Endothelial cell of umbilical vein (primary cell): ENCODE measurements at regions of chr20 and their contacts with region 1.

Region 1: GRCh38 chr20:44733341-44734069 is 12.2 kb upstream of the KCNK15 start:
- DNase-seq: peak; percentile 74
- H3K4me3 ChIP-seq: no peak overlapping the region
- H3K27ac ChIP-seq: no peak overlapping the region
- H3K4me1 ChIP-seq: peaks cover 12% of the 10 kb centered on the region
- H3K27me3 ChIP-seq: no peaks in the 10 kb centered on the region
- CTCF ChIP-seq: peak; percentile 84 to 92
- POLR2A ChIP-seq: no peak

Region 2: GRCh38 chr20:44532259-44532980 is 201.1 kb before region 1 on chr20:
- CTCF ChIA-PET with region 1: no interaction called
- POLR2A ChIA-PET with region 1: no interaction called
- dilution Hi-C with region 1: no loop called
- intact Hi-C with region 1: loop called (anchors 10 kb)
- DNase-seq: peak; percentile 52
- H3K4me3 ChIP-seq: peak overlapping the region; percentile 80 to 92 (median 85)
- H3K27ac ChIP-seq: peak overlapping the region; percentile 78
- H3K4me1 ChIP-seq: peaks cover 20% of the 10 kb centered on the region
- H3K27me3 ChIP-seq: no peaks in the 10 kb centered on the region
- CTCF ChIP-seq: no peak
- POLR2A ChIP-seq: peak; percentile 20

Region 3: DNA sequence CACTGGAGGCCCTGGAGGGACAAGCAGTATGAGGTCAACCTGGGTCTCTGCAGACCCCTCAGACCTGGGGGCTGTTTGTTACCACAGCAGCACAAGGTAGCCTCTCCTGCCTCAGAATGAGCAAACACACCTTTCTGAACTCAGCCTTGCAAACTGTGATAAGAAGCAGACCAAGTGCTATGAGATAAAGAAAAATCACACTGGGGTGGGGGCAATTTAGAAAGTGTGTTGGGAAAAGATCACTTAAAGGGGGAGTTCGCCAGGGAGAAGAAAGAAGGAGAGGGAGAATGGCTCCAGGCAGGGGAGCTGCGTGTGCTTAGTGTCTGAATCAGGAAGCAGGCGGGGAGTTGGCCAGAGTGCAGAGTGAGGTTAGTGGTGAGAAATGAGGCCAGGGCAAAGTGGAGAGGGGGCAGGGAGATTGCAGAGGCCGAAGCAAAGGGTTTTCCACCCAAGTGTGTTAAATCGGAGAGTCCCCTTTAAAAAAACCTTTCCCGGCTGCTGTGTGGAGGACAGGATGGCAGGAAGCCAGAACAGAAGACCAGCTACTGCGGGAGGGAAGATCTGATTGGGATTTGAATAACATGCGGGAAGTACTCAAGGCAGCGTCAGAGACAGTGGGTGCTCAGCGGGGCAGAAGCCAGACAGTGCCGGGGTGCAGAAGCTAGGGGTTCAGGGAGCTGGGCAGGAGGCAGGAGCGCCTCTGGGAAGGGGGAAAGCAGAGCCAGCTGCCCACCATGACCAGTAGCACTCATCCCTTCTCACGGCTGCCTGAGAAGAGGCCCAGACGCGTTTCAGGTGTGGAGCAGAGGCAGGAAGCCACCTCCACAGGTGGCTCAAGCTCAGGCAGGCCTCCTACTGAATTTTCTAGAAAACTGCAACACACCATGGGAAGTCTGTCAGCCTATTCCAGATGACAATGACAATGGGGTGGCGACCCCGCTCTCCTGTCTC is 91.0 kb before region 1 on chr20:
- CTCF ChIA-PET with region 1: interaction called, 10 read pairs
- POLR2A ChIA-PET with region 1: no interaction called
- dilution Hi-C with region 1: no loop called
- intact Hi-C with region 1: loop called (anchors 1 kb)
- DNase-seq: peak; percentile 89
- H3K4me3 ChIP-seq: no peak overlapping the region
- H3K27ac ChIP-seq: peak overlapping the region; percentile 98
- H3K4me1 ChIP-seq: peaks cover 48% of the 10 kb centered on the region
- H3K27me3 ChIP-seq: no peaks in the 10 kb centered on the region
- CTCF ChIP-seq: no peak
- POLR2A ChIP-seq: peak; percentile 21

Region 4: DNA sequence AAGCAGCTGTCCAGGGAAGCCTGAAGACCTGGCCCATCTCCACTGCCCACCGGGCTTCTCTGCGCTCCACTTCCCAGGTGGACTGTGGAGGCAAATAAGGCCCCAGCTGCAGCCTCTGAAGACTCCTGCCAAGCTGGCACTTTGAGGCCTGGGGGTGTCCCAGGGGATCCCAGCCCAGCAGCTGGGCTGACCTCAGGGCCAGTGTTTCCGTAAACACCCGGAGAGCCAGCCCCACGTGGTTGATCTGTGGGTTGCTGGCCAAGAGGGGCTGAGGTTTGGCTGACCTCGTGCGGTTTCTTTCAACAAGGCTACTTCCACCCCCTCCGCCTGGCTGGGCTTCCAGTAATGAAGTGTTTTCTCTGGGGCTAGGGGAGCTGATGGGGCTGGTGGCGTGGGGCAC is 30.7 kb before region 1 on chr20:
- CTCF ChIA-PET with region 1: interaction called, 11 read pairs
- POLR2A ChIA-PET with region 1: no interaction called
- dilution Hi-C with region 1: no loop called
- intact Hi-C with region 1: no loop called
- DNase-seq: peak; percentile 94
- H3K4me3 ChIP-seq: no peak overlapping the region
- H3K27ac ChIP-seq: no peak overlapping the region
- H3K4me1 ChIP-seq: peaks cover 13% of the 10 kb centered on the region
- H3K27me3 ChIP-seq: no peaks in the 10 kb centered on the region
- CTCF ChIP-seq: no peak
- POLR2A ChIP-seq: no peak

Region 5: GRCh38 chr20:44790638-44791393 is 57.3 kb after region 1 on chr20:
- CTCF ChIA-PET with region 1: no interaction called
- POLR2A ChIA-PET with region 1: no interaction called
- dilution Hi-C with region 1: no loop called
- intact Hi-C with region 1: no loop called
- DNase-seq: no peak
- H3K4me3 ChIP-seq: no peak overlapping the region
- H3K27ac ChIP-seq: no peak overlapping the region
- H3K4me1 ChIP-seq: no peaks in the 10 kb centered on the region
- H3K27me3 ChIP-seq: no peaks in the 10 kb centered on the region
- CTCF ChIP-seq: no peak
- POLR2A ChIP-seq: no peak

Region 6: DNA sequence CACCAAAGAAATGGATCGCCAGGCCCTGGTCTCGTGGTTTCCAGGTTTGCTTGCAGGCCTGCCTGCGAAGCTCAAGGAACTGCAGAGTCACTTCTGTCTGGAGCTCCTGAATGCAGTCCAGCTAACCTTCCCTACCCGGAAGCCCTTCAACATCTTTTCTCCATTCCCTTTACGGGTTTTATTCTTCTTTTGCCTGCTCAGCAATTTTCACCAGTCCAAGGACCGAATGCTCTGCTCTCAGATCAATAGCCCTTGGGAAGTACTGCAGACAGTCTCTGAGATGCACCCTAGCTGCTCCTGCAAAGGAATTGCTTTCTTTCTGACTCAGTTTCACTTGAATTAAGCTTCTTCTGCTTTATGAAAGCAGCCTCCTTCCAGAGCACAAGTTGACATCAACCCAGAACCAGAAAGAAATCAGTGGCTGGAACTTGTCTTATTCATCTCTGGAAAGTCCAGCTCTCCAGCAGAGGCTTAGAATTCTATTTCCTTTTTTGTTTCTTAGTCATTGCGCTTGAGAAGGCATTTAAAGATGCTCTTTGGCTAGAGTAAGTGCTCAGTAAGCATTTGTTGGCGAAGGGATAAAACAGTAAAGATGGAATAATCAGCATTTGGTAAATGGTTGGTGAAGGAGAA is 133.3 kb after region 1 on chr20:
- CTCF ChIA-PET with region 1: no interaction called
- POLR2A ChIA-PET with region 1: no interaction called
- dilution Hi-C with region 1: no loop called
- intact Hi-C with region 1: loop called (anchors 1 kb)
- DNase-seq: no peak
- H3K4me3 ChIP-seq: no peak overlapping the region
- H3K27ac ChIP-seq: no peak overlapping the region
- H3K4me1 ChIP-seq: no peaks in the 10 kb centered on the region
- H3K27me3 ChIP-seq: peaks cover 8 to 14% of the 10 kb centered on the region in 2 experiments
- CTCF ChIP-seq: no peak
- POLR2A ChIP-seq: no peak